Thyroid gland (tissue), 4 donors: ENCODE measurements at regions of chr1 and their contacts with region 1.

Region 1: GRCh38 chr1:110619412-110620249 is 13.5 kb upstream of the KCNA2 start:
- DNase-seq: peak; percentile 90 to 94
- H3K4me3 ChIP-seq: no peak overlapping the region
- H3K27ac ChIP-seq: peak overlapping the region; percentile 8 to 39 (median 12)
- H3K4me1 ChIP-seq: peaks cover 6 to 16% of the 10 kb centered on the region in 2 donors
- H3K27me3 ChIP-seq: no peaks in the 10 kb centered on the region
- CTCF ChIP-seq: peak; percentile 87 to 99 (median 93)
- POLR2A ChIP-seq: peak in 1 of 2 donors; percentile 13

Region 2: DNA sequence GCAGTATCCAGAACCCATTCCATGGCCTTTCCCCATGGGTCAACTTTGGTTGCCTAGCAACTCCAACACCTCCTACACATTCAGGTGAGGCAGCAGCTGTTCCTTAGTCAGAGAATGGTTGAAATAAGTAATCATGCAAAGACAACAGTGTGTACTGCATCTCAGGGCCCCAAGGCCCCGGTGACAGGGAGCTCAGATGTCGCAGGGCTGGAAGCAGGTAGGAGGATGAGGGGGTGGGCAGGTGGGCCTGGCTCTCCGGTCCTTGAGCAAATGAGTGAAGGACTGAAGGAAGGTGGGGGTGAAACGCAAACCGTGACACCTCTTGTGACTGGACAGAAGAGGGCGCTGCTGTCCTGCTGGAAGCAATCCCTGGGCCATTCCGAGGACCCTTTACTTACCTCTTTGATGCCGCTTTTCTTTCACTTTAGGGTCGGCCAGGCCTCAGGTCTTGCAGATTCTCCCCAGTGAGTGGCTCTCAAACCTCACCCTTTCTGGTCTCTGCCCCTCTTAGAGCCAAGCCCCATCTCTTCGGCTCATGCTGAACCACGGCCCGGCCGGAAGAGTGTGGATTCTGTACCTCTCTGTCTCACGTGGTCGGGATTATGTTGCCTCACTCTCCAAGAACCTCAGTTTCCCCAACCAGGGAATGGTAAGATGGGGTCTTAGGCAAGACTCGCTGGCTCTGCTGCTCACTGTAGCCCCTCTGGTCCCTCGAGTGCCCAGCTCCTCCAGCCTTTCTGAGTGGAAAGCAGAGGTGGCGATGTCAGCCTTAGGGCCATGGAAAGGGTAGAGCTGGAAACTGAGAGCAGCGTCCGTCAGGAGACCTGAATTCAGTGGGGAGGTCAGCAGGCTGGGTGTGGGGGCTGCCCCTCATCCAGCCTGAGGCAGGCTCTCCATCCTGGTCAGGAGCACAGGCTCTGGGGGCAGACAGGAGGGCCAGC is 95.0 kb before region 1 on chr1:
- intact Hi-C with region 1: loop called (anchors 10 kb)
- DNase-seq: peak; percentile 20 to 26
- H3K4me3 ChIP-seq: no peak overlapping the region
- H3K27ac ChIP-seq: no peak overlapping the region
- H3K4me1 ChIP-seq: no peaks in the 10 kb centered on the region
- H3K27me3 ChIP-seq: no peaks in the 10 kb centered on the region
- CTCF ChIP-seq: peak; percentile 25 to 57 (median 42)
- POLR2A ChIP-seq: no peak

Region 3: GRCh38 chr1:110555807-110556470 is 63.7 kb before region 1 on chr1:
- intact Hi-C with region 1: loop called (anchors 2 kb)
- DNase-seq: peak; percentile 75 to 77
- H3K4me3 ChIP-seq: no peak overlapping the region
- H3K27ac ChIP-seq: no peak overlapping the region
- H3K4me1 ChIP-seq: peaks cover 5 to 8% of the 10 kb centered on the region in 2 donors
- H3K27me3 ChIP-seq: no peaks in the 10 kb centered on the region
- CTCF ChIP-seq: no peak
- POLR2A ChIP-seq: no peak